Calu3 (cell line): ENCODE measurements at regions of chr1 and their contacts with region 1.

Region 1: DNA sequence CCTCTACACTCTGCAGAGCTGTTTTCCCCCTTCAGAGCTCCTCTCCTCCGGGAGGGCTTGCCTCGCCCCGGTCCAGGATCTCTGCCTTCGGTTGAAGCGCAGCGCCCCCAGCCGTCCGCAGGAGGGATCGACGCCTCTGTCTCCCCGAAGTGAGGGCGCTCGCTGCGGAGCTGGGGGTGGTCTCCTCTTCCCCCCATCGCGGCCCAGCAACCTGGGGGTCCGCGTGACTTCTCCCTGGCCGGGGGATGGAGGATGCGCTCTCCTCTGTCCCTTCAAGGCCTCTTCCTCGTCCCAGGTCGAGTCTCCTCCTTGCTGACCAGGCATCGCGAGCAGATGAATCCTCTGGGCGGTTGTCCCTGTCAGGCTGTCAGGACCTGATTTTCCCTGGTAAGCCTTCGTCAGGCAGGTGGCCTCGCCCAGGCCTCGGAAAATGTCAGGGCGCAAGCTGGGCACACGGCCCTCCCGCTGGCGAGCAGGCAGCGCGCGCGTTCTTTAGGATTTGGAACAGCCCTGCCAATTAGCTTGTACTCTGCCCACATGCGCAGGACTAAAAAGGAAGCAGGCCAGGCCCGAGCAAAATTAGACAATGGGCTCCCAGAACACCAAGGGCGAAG is 90.5 kb downstream of the EDEM3 start:
- DNase-seq: peak; percentile 85
- H3K4me3 Mint-ChIP-seq: peak overlapping the region; percentile 76
- H3K27ac Mint-ChIP-seq: no peak overlapping the region
- H3K4me1 Mint-ChIP-seq: peaks cover 11% of the 10 kb centered on the region
- H3K27me3 Mint-ChIP-seq: no peaks in the 10 kb centered on the region
- CTCF ChIP-seq: peak; percentile 98

Region 2: DNA sequence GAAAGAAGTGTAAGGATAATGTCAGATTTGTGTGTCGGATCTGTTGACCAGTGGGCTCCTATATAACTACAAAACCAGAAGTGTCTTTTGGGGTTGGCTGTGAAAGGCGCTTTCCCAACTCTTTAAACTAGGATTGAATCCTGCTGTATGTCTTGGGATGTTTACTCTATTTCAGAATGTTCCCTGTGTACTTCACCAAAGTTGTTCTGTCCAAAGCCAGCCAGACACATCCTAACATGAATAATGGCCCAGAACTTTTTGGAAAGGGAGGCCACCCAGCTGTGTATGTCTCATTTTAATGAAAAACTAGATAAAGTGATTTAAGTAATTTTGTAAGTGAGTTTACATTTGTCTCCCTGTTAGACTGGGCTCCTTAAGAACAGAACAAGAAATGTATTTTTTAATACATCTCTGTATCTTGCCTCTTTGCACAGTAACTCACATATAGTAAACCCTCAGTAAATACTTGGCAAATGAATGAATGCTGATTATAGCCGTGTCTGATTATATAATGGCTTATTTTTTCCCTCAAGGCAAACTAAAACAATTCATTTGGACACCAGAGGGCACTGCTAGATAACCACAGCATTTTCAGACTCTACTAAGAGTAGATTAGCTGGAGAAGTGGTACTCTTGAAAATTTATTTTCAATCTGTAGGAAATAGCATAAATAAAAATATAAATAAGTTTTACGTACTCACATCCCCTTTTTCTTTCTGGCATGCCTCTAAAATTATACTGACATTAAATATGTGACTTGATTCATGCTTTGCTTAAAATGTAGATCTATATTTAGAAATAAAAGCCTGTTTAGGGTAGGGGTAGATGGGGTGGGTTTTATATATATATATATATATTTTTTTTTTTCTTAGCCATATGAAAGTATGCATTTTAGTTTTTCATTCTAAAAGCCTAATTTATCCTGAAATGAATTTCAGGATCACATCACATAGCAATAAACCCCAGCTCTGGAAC is 588.8 kb before region 1 on chr1:
- CTCF ChIA-PET with region 1: interaction called, 14 read pairs
- intact Hi-C with region 1: loop called (anchors 1 kb)
- DNase-seq: peak; percentile 50
- H3K4me3 Mint-ChIP-seq: no peak overlapping the region
- H3K27ac Mint-ChIP-seq: no peak overlapping the region
- H3K4me1 Mint-ChIP-seq: no peaks in the 10 kb centered on the region
- H3K27me3 Mint-ChIP-seq: no peaks in the 10 kb centered on the region
- CTCF ChIP-seq: peak; percentile 51

Region 3: DNA sequence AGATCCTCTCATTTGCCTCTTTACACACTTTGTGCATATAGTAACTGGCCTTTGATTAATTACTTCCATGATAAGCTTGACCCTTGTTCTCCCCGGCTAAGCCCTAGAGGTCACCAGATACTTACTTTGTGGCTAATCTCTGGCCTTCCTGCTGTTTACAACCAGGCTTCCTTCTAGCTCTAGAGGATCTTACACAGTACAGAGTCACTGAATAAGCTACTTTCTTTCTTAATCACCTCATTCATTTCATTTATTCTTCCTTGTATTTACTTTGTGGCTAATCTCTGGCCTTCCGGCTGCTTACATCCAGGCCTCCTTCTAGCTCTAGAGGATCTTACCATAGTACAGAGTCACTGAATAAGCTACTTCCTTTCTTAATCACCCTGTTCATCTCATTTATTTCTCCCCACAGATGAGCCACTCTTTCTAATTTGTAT is 421.6 kb before region 1 on chr1:
- CTCF ChIA-PET with region 1: interaction called, 37 read pairs
- intact Hi-C with region 1: loop called (anchors 5 kb)
- DNase-seq: no peak
- H3K4me3 Mint-ChIP-seq: no peak overlapping the region
- H3K27ac Mint-ChIP-seq: no peak overlapping the region
- H3K4me1 Mint-ChIP-seq: peaks cover 14% of the 10 kb centered on the region
- H3K27me3 Mint-ChIP-seq: peaks cover 41% of the 10 kb centered on the region
- CTCF ChIP-seq: no peak

Region 4: GRCh38 chr1:184379111-184379946 is 284.8 kb before region 1 on chr1:
- CTCF ChIA-PET with region 1: interaction called, 40 read pairs
- intact Hi-C with region 1: loop called (anchors 1 kb)
- DNase-seq: peak; percentile 35
- H3K4me3 Mint-ChIP-seq: no peak overlapping the region
- H3K27ac Mint-ChIP-seq: no peak overlapping the region
- H3K4me1 Mint-ChIP-seq: peaks cover 8% of the 10 kb centered on the region
- H3K27me3 Mint-ChIP-seq: no peaks in the 10 kb centered on the region
- CTCF ChIP-seq: no peak

Region 5: GRCh38 chr1:184494929-184495328 is 169.2 kb before region 1 on chr1:
- CTCF ChIA-PET with region 1: interaction called, 15 read pairs
- intact Hi-C with region 1: no loop called
- DNase-seq: no peak
- H3K4me3 Mint-ChIP-seq: no peak overlapping the region
- H3K27ac Mint-ChIP-seq: no peak overlapping the region
- H3K4me1 Mint-ChIP-seq: peaks cover 35% of the 10 kb centered on the region
- H3K27me3 Mint-ChIP-seq: no peaks in the 10 kb centered on the region
- CTCF ChIP-seq: no peak

Region 6: GRCh38 chr1:184535191-184535970 is 128.8 kb before region 1 on chr1:
- CTCF ChIA-PET with region 1: no interaction called
- intact Hi-C with region 1: no loop called
- DNase-seq: no peak
- H3K4me3 Mint-ChIP-seq: no peak overlapping the region
- H3K27ac Mint-ChIP-seq: no peak overlapping the region
- H3K4me1 Mint-ChIP-seq: no peaks in the 10 kb centered on the region
- H3K27me3 Mint-ChIP-seq: no peaks in the 10 kb centered on the region
- CTCF ChIP-seq: no peak

Region 7: GRCh38 chr1:184563308-184563707 is 100.8 kb before region 1 on chr1:
- CTCF ChIA-PET with region 1: interaction called, 27 read pairs
- intact Hi-C with region 1: loop called (anchors 5 kb)
- DNase-seq: peak; percentile 18
- H3K4me3 Mint-ChIP-seq: no peak overlapping the region
- H3K27ac Mint-ChIP-seq: no peak overlapping the region
- H3K4me1 Mint-ChIP-seq: peaks cover 15% of the 10 kb centered on the region
- H3K27me3 Mint-ChIP-seq: no peaks in the 10 kb centered on the region
- CTCF ChIP-seq: peak; percentile 29